HEK293 (cell line): ENCODE measurements at regions of chr17 and their contacts with region 1.

Region 1: GRCh38 chr17:27818401-27819105 is 18.2 kb upstream of the NOS2 start:
- H3K4me3 ChIP-seq: no peak overlapping the region
- H3K27ac ChIP-seq: no peak overlapping the region
- H3K4me1 ChIP-seq: no peaks in the 10 kb centered on the region
- CTCF ChIP-seq: no peak

Region 2: DNA sequence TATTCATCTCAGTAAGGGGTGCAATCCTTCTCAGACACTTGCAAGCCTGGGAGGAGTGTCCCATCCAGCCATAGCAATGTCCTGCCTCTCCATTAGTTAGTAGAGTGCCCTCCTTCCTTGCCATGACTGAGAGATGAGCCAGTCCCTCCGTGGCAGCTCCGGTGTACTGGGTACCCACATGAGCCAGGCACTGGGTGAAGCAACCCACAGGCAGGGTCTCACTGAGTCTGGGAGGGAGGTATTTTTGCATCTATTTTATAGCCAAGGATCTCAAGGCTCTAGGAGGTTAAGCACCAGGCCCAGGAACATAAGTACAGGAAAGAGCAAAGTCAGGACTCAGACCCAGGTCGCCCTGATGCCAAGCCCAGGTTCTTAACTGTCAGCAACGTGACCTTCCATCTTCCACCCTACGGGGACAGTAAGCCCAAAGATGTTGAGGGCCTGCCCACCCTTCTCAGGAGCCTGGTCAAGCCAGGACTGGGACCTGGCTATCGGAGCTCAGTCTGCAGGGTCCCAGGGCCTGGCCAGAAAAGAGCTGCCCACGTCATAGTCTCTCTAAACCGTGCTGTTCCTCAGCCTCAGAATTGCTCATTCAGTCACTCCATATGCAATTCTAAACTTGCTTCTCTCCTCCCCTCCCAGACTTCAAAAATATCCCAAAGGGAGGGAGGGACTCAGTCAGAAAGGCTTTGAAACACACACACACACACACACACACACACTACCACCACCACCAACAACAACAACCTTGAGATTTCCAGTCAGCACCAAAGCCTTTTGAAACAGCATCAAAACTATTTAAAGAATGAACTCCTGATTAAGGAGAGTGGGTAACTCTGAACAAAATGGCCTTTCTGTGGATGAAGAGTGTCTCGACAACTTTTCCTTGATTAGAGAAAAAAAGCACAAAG is 34.9 kb before region 1 on chr17:
- CTCF ChIA-PET with region 1: no interaction called
- POLR2A ChIA-PET with region 1: no interaction called
- H3K4me3 ChIP-seq: no peak overlapping the region
- H3K27ac ChIP-seq: no peak overlapping the region
- H3K4me1 ChIP-seq: no peaks in the 10 kb centered on the region
- CTCF ChIP-seq: no peak

Region 3: DNA sequence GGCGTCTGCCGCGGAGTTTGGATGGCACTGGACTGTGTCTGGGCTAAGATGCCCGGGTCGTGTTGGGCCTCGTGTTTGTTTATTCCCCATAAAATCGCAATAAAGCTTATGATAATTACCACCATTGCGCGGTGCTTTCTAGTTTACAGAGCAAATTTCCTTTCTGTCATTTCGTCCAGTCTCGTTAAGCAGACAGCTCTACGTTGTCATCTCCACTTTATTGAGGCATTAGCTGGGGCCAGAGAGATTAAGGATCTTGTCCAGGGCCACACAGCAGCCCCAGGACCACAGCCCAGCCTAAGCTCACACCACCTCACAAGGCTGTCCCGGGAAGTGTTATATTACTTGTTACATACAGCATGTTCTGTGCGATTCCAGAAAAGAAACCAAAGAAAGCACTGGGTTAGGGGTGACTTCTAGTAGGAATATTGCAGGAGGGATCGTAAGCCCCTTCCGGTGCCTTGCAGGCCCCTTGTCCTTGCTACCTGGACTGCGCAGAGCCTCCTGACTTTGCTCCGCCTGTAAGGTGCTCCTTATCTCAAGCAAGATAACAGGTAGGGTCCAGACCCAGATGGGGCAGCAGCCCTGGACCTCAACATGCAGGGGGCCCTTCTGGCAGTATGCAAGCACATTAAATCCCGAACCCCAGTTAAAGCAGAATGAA is 24.5 kb before region 1 on chr17:
- CTCF ChIA-PET with region 1: no interaction called
- POLR2A ChIA-PET with region 1: no interaction called
- H3K4me3 ChIP-seq: peak overlapping the region; percentile 9
- H3K27ac ChIP-seq: no peak overlapping the region; the same call in 1 of the 2 replicates
- H3K4me1 ChIP-seq: peaks cover 11% of the 10 kb centered on the region; the same call in 1 of the 2 replicates
- CTCF ChIP-seq: no peak

Region 4: DNA sequence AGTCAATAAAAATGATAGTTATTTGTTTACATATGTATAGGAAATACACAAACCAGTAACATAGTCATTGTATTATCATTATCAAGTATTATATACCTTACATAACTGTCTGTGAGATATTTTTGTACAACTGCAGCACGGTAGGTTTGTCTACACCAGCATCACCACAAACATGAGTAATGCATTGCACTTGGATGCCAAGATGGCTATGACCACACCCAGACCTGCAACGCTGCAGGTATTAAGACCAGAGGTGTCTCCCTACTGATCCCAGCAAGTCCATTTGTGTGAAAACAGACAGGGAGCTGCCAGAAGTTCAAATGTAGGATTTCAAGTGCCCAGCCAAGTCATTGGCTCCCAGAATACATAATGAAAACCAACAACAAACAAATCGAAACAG is 16.0 kb after region 1 on chr17:
- CTCF ChIA-PET with region 1: no interaction called
- POLR2A ChIA-PET with region 1: no interaction called
- H3K4me3 ChIP-seq: no peak overlapping the region
- H3K27ac ChIP-seq: no peak overlapping the region
- H3K4me1 ChIP-seq: no peaks in the 10 kb centered on the region
- CTCF ChIP-seq: no peak

Region 5: DNA sequence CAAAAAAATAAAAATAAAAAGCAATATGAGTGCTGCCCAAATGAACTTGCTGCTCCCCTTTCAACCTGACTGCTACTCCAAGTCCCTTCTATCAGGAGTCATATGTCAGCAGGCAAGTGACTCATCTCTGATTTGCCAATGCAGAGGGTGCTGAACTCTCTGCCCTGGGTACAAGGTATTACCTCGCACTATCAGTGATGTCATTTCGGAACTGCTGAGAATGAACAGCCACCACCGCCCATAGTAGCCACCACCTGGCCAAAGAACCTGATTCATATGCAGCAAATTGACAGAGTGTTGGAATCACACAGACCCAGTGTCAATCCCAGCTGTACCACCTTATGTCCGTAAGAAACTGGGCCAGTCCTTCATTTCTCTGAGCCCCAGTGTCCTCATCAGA is 43.5 kb after region 1 on chr17:
- CTCF ChIA-PET with region 1: no interaction called
- POLR2A ChIA-PET with region 1: no interaction called
- H3K4me3 ChIP-seq: no peak overlapping the region
- H3K27ac ChIP-seq: no peak overlapping the region
- H3K4me1 ChIP-seq: no peaks in the 10 kb centered on the region
- CTCF ChIP-seq: no peak

Region 6: DNA sequence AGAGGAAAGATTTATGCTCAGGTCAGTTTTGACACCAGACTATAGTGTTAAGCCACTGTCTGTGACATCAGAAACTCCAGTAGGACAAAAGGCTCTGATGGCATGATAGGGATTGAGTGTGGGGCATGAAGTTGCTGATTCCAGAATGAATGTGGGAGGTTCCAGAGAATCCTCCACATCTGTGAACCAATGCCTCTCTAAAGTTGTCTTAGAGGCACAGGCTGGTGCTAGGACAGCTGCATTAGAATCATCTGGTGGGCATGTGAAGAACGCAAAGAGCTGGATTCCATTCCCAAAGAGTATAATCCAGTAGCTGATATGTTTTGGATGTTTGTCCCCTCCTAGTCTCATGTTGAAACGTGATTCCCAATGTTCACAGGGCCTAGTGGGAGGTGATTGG is 191.9 kb after region 1 on chr17:
- CTCF ChIA-PET with region 1: interaction called, 11 read pairs
- POLR2A ChIA-PET with region 1: no interaction called
- H3K4me3 ChIP-seq: no peak overlapping the region
- H3K27ac ChIP-seq: no peak overlapping the region
- H3K4me1 ChIP-seq: no peaks in the 10 kb centered on the region
- CTCF ChIP-seq: no peak